Activated CD4-positive, alpha-beta memory T cell treated with anti-CD3 and anti-CD28 coated beads, Interleukin-2, amount 10 ng/mL, durations not matched to agents 7 days and 5 days (primary cell): ENCODE measurements at regions of chr5 and their contacts with region 1.

Region 1: DNA sequence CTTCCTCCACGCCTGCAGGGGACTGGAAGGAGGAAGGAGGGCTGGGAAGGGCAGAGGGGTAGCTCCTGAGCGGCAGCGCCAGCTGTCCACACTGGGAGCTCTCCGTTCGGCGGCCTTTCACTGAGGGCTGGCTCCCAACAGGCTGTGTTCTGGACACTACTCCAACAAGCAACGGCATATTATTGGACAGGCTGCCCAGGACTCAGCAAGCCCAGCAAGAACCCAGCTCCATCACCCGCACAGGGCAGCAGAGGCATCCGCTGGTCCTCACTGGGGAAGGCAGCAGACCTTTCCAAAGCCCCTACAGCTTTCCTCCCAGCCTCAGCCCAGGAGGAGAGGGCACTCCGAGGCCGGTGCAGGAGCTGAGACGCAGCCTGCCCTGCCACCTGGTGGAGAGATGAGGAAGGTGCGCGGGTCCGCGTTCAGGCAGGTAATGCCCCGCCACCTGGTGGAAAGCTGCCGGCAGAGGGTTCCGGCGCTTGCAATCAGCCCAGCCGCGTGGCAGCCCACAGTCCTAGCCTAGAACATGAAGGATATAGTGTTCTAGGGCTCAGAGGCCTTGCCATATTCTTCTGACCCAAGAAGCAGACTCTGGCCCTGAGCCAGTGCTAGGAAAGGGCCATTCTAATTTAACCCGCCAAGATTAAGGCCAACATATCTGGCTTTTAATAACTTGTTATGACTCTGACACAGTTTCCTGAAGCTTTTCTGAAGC is 74.4 kb downstream of the NRG2 start:
- DNase-seq: peak; percentile 89
- H3K4me3 Mint-ChIP-seq: no peak overlapping the region
- H3K27ac Mint-ChIP-seq: no peak overlapping the region
- H3K4me1 Mint-ChIP-seq: no peaks in the 10 kb centered on the region
- H3K27me3 Mint-ChIP-seq: peaks cover 18% of the 10 kb centered on the region

Region 2: DNA sequence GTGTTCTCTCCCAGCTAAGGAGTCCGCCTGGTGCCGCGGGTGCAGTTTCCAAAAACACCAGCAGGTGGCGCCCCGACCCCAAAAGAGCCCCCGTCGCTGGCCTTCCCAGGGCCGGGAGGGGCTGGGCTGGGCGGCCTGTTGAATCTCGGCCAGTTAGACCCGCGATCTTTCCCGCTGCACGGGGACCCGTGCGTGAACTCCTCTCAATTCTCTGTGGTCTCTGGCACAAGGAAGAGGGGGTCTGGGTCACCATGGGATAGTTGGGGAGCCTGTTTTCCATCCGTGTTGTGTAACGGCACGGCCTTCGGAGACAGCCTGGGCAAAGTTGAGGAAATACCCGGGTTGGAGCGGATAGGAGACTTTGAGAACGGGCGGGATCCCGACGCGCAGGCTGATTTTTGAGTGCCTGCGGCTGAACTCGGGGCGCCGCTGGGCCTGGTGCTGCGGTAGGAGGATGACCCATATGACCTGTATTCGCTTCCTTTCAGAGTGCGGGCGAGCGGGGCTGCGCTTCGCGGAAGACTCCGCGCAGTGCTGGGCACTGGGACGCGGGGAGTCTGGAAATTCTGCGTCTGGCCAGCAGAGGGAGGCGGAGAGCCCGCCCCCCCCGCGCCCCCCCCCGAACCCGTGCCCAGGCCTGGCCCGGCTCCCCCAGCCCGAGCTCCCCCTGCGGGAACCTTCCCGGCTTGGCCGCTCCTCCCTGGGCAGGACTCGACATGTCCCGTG is 181.0 kb before region 1 on chr5:
- CTCF ChIA-PET with region 1: interaction called, 170 read pairs
- POLR2A ChIA-PET with region 1: interaction called, 5 read pairs
- DNase-seq: peak; percentile 82
- H3K4me3 Mint-ChIP-seq: peak overlapping the region; percentile 57
- H3K27ac Mint-ChIP-seq: no peak overlapping the region
- H3K4me1 Mint-ChIP-seq: peaks cover 4% of the 10 kb centered on the region
- H3K27me3 Mint-ChIP-seq: peaks cover 31% of the 10 kb centered on the region

Region 3: GRCh38 chr5:139942243-139942642 is 26.5 kb before region 1 on chr5:
- CTCF ChIA-PET with region 1: interaction called, 20 read pairs
- POLR2A ChIA-PET with region 1: no interaction called
- DNase-seq: no peak
- H3K4me3 Mint-ChIP-seq: no peak overlapping the region
- H3K27ac Mint-ChIP-seq: no peak overlapping the region
- H3K4me1 Mint-ChIP-seq: no peaks in the 10 kb centered on the region
- H3K27me3 Mint-ChIP-seq: peaks cover 60% of the 10 kb centered on the region

Region 4: GRCh38 chr5:139949710-139950109 is 19.0 kb before region 1 on chr5:
- CTCF ChIA-PET with region 1: interaction called, 16 read pairs
- POLR2A ChIA-PET with region 1: no interaction called
- DNase-seq: no peak
- H3K4me3 Mint-ChIP-seq: no peak overlapping the region
- H3K27ac Mint-ChIP-seq: no peak overlapping the region
- H3K4me1 Mint-ChIP-seq: no peaks in the 10 kb centered on the region
- H3K27me3 Mint-ChIP-seq: peaks cover 31% of the 10 kb centered on the region

Region 5: GRCh38 chr5:139955053-139955605 is 13.6 kb before region 1 on chr5:
- CTCF ChIA-PET with region 1: interaction called, 38 read pairs
- POLR2A ChIA-PET with region 1: no interaction called
- DNase-seq: no peak
- H3K4me3 Mint-ChIP-seq: no peak overlapping the region
- H3K27ac Mint-ChIP-seq: no peak overlapping the region
- H3K4me1 Mint-ChIP-seq: no peaks in the 10 kb centered on the region
- H3K27me3 Mint-ChIP-seq: peaks cover 11% of the 10 kb centered on the region

Region 6: DNA sequence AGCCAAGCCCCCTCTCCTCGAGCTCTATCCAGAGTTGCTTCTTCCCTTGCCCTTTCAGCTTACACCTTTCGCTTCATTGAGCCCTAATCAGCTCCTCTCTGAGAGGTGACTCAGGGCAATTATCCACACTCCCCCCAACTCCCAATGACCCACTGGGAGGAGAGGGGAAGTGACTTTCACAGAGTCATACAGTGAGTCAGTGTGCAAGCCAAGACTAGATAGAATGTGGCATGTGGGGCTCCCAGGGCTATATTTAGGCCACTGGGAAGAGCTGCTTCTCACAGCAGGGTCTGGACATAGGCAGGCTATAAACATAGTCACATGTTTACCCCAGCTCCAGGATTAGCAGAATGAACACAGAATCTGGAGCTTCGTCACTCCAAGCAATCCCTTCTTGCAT is 17.0 kb after region 1 on chr5:
- CTCF ChIA-PET with region 1: interaction called, 16 read pairs
- POLR2A ChIA-PET with region 1: interaction called, 3 read pairs
- DNase-seq: no peak
- H3K4me3 Mint-ChIP-seq: no peak overlapping the region
- H3K27ac Mint-ChIP-seq: no peak overlapping the region
- H3K4me1 Mint-ChIP-seq: no peaks in the 10 kb centered on the region
- H3K27me3 Mint-ChIP-seq: peaks cover 20% of the 10 kb centered on the region

Region 7: GRCh38 chr5:140145818-140146522 is 177.3 kb after region 1 on chr5:
- CTCF ChIA-PET with region 1: interaction called, 10 read pairs
- POLR2A ChIA-PET with region 1: no interaction called
- DNase-seq: peak; percentile 59
- H3K4me3 Mint-ChIP-seq: no peak overlapping the region
- H3K27ac Mint-ChIP-seq: no peak overlapping the region
- H3K4me1 Mint-ChIP-seq: peaks cover 18% of the 10 kb centered on the region
- H3K27me3 Mint-ChIP-seq: peaks cover 24% of the 10 kb centered on the region

Region 8: DNA sequence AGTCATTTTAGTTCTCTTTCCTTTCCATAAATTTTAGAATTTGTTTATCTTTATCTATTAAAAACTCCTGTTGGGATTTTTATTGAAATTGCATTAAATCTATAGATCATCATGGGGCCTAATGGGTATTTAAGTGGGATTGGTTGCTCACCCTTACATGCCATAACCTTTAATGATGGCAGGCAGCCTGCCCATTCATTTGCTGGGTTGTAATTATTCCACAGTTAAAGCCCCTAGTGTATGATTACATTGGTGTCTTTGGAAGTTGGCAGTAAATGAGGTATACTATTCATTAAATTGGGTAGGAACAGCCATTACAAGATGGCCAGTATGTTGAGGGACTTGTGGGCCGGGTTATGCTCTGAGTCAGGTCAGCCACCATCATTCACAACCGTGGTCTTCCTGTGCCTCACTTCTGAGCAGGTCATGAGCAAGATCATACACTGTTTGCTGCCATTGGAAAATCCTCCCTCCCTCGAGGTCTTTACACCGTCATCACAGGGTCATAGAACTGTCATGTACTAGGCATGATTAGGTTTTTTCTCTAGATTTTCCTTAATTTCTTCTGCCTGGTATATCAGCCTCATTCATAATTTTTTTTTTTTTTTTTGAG is 265.8 kb after region 1 on chr5:
- CTCF ChIA-PET with region 1: no interaction called
- POLR2A ChIA-PET with region 1: no interaction called
- DNase-seq: no peak
- H3K4me3 Mint-ChIP-seq: no peak overlapping the region
- H3K27ac Mint-ChIP-seq: no peak overlapping the region
- H3K4me1 Mint-ChIP-seq: no peaks in the 10 kb centered on the region
- H3K27me3 Mint-ChIP-seq: peaks cover 5% of the 10 kb centered on the region

Region 9: DNA sequence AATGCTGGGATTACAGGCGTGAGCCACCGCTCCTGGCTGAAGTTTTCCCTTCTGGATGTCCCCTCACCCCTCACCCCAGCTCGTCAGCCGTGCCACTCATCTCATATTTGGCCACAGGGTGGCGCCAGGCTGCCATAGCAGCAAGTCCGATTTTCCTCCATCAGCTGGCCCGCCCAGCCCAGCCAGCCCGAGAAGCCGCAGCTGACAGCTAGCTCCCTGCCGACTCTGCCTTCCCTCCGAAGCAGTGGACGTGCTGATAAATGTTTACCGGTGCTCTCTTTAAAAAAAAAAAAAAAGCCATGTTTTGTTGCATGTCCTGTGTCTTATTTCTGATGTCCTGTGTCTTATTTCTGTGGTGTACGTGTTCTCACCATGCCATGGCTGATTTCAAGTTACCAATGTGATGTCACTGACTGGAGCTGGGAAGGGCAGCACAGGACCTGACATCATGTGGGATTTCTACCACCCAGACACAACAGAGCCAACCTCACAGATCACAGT is 275.9 kb after region 1 on chr5:
- CTCF ChIA-PET with region 1: no interaction called
- POLR2A ChIA-PET with region 1: no interaction called
- DNase-seq: peak; percentile 89
- H3K4me3 Mint-ChIP-seq: no peak overlapping the region
- H3K27ac Mint-ChIP-seq: peak overlapping the region; percentile 60
- H3K4me1 Mint-ChIP-seq: peaks cover 47% of the 10 kb centered on the region
- H3K27me3 Mint-ChIP-seq: no peaks in the 10 kb centered on the region